HEK293T (cell line): ENCODE measurements at regions of chr11 and their contacts with region 1.

Region 1: GRCh38 chr11:43825217-43825816 is 55.3 kb upstream of the ALKBH3 start:
- DNase-seq: peak; percentile 21

Region 2: DNA sequence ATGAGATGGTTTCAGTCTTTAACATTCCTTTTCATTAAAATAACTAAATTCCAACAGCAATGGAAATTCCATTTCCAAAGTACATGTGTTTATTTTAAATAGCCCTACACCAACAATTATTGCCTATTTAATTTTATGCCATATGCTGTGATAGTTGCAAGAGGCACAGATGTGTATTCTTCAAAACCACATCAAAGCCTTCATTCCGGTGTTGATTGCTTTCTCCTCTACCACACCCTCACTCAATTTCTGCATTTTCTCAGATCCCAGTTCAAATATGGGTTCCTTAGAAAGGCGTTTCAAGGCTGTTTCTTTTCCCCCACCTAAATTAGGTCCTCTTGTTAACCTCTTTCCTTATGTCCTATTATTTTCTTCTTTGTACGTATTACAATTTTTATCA is 150.8 kb before region 1 on chr11:
- CTCF ChIA-PET with region 1: no interaction called
- POLR2A ChIA-PET with region 1: no interaction called
- DNase-seq: no peak

Region 3: DNA sequence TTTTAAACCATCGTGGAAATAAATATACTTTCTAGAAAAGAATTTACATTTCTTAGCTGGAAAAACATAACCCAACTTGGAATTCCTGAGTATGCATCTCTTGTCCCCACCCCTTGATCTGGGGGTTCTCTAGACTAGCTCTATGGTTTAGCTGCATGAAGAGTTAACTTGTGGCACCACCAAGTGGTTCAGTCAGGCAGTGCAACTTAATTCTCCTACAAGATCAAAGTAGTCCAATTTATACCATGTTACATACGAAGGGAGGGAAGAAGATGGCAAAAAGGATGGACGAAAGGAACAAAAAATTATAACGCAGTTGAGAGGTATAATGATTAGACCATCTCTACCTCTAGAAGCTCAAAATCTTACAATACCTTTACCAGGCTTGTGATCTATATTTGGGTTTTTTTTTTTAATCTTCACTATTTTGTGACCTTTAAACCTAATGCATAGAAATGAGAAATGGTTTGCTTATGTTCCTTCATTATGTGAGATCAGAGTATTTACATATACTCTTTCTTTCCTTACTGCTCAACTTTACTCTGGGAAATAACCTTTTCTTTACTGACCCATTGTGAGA is 26.8 kb after region 1 on chr11:
- CTCF ChIA-PET with region 1: interaction called, 13 read pairs
- POLR2A ChIA-PET with region 1: no interaction called
- DNase-seq: peak; percentile 62

Region 4: GRCh38 chr11:43880640-43881159 is 55.4 kb after region 1 on chr11 and contains the start of gene ALKBH3:
- CTCF ChIA-PET with region 1: no interaction called
- POLR2A ChIA-PET with region 1: no interaction called
- DNase-seq: peak; percentile 90

Region 5: DNA sequence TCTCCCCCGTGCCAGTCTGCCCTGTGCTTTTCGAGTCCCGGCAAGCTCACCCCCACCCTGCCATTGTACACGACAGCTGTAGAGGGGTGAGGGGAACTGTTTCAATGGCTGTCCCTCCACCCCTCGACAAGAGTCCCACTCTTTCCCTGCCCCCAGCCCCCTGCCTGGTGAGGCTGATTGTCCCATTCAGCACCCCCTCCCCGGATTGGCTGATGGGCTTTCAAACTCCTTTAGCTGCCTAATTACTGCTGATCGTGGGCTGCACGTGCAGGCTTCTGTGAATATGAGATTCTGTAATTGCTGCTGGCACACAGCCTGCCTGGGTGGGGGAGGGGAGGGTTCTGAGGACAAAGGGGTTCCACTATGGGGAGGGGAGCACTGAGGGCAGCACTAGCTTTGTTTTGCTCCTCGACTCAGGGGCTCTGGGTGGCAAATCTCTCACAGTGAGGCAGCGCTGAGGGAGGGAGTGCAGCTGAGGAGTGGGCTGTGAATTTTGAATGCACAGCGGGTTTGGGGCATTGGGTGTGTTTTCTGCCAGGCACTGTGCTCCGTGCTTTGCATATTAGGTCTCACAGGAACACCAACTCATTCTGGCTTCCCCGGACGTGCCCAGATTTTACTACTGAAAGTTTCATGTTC is 179.9 kb after region 1 on chr11:
- CTCF ChIA-PET with region 1: no interaction called
- POLR2A ChIA-PET with region 1: no interaction called
- DNase-seq: no peak